ENCODE measurements at regions of chr7 and their contacts with region 1.

Region 1: GRCh38 chr7:26200444-26201246 is at the start of gene HNRNPA2B1:
- DNase-seq: peak; percentile 97
- ATAC-seq: peak; percentile 81
- H3K4me3 ChIP-seq: peak within 1 kb of the TSS; percentile 81
- H3K27ac ChIP-seq: peak within 1 kb of the TSS; percentile 100
- H3K4me1 ChIP-seq: 0 out of 2 replicates have a peak, but pooled peaks cover 2% of the 10 kb centered on the region
- H3K27me3 ChIP-seq: no peaks in the 10 kb centered on the region
- CTCF ChIP-seq: no peak
- POLR2A ChIP-seq: peak; percentile 100
- RAD21 ChIP-seq: no peak
- total RNA-seq, gene HNRNPA2B1: 49.3 and 118 TPM in 2 replicates

Region 2: GRCh38 chr7:25851332-25852210 is 349.1 kb before region 1 on chr7:
- CTCF ChIA-PET with region 1: no interaction called
- POLR2A ChIA-PET with region 1: no interaction called
- dilution Hi-C with region 1: no loop called
- in situ Hi-C with region 1: loop called (anchors 10 kb)
- intact Hi-C with region 1: loop called (anchors 10 kb)
- DNase-seq: peak; percentile 76
- ATAC-seq: peak; percentile 46
- H3K4me3 ChIP-seq: no peak overlapping the region
- H3K27ac ChIP-seq: peak overlapping the region; percentile 14; the same call in 1 of the 2 replicates
- H3K4me1 ChIP-seq: peaks cover 20% of the 10 kb centered on the region; the same call in 1 of the 2 replicates
- H3K27me3 ChIP-seq: peaks cover 3% of the 10 kb centered on the region; the same call in 1 of the 2 replicates
- CTCF ChIP-seq: peak; percentile 83
- POLR2A ChIP-seq: no peak
- RAD21 ChIP-seq: peak; percentile 88

Region 3: GRCh38 chr7:26156454-26157365 is 43.9 kb before region 1 on chr7:
- CTCF ChIA-PET with region 1: interaction called, 3 read pairs
- POLR2A ChIA-PET with region 1: no interaction called
- dilution Hi-C with region 1: no loop called
- in situ Hi-C with region 1: no loop called
- intact Hi-C with region 1: loop called (anchors 1 kb)
- DNase-seq: peak; percentile 97
- ATAC-seq: peak; percentile 74
- H3K4me3 ChIP-seq: peak overlapping the region; percentile 20
- H3K27ac ChIP-seq: peak overlapping the region; percentile 89
- H3K4me1 ChIP-seq: peaks cover 32% of the 10 kb centered on the region
- H3K27me3 ChIP-seq: no peaks in the 10 kb centered on the region
- CTCF ChIP-seq: no peak
- POLR2A ChIP-seq: no peak
- RAD21 ChIP-seq: no peak

Region 4: GRCh38 chr7:26534649-26535482 is 334.2 kb after region 1 on chr7:
- CTCF ChIA-PET with region 1: no interaction called
- POLR2A ChIA-PET with region 1: no interaction called
- dilution Hi-C with region 1: no loop called
- in situ Hi-C with region 1: no loop called
- intact Hi-C with region 1: no loop called
- DNase-seq: no peak
- ATAC-seq: no peak
- H3K4me3 ChIP-seq: no peak overlapping the region
- H3K27ac ChIP-seq: no peak overlapping the region
- H3K4me1 ChIP-seq: no peaks in the 10 kb centered on the region
- H3K27me3 ChIP-seq: peaks cover 5% of the 10 kb centered on the region
- CTCF ChIP-seq: no peak
- POLR2A ChIP-seq: no peak
- RAD21 ChIP-seq: no peak

Region 5: DNA sequence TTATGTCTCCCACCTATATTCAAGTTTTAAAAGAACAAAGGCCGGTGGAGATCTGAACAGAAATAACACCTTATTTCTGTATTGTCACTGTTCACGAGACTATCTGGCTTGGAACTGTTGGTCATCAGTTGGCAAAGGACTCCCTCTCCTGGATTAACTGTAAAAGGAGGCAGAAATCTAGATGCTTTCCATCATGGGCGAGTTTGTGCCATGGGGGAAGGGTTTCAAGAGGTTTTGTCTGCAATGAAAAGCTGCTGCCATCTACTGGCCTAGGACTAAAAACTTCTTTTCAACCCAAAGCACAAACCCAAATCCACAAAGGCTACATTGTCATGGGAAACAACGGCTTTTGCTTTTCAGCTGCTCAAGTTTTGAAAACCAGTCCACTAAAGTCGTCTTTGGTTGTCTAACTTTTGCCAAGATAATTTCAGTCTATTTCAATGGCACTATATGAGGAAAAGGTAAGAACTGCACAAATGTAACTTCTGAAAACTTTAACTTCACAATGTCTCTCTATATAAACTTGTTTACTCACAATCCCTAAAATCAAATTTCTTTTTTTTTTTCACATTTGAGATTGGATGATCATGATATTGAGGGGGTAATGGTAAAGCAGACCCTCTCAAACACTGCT is 467.0 kb after region 1 on chr7:
- CTCF ChIA-PET with region 1: no interaction called
- POLR2A ChIA-PET with region 1: no interaction called
- dilution Hi-C with region 1: no loop called
- in situ Hi-C with region 1: loop called (anchors 25 kb)
- intact Hi-C with region 1: loop called (anchors 2 kb)
- DNase-seq: peak; percentile 90
- ATAC-seq: peak; percentile 96
- H3K4me3 ChIP-seq: no peak overlapping the region
- H3K27ac ChIP-seq: no peak overlapping the region
- H3K4me1 ChIP-seq: no peaks in the 10 kb centered on the region
- H3K27me3 ChIP-seq: no peaks in the 10 kb centered on the region
- CTCF ChIP-seq: peak; percentile 95
- POLR2A ChIP-seq: no peak
- RAD21 ChIP-seq: peak; percentile 80

Region 6: DNA sequence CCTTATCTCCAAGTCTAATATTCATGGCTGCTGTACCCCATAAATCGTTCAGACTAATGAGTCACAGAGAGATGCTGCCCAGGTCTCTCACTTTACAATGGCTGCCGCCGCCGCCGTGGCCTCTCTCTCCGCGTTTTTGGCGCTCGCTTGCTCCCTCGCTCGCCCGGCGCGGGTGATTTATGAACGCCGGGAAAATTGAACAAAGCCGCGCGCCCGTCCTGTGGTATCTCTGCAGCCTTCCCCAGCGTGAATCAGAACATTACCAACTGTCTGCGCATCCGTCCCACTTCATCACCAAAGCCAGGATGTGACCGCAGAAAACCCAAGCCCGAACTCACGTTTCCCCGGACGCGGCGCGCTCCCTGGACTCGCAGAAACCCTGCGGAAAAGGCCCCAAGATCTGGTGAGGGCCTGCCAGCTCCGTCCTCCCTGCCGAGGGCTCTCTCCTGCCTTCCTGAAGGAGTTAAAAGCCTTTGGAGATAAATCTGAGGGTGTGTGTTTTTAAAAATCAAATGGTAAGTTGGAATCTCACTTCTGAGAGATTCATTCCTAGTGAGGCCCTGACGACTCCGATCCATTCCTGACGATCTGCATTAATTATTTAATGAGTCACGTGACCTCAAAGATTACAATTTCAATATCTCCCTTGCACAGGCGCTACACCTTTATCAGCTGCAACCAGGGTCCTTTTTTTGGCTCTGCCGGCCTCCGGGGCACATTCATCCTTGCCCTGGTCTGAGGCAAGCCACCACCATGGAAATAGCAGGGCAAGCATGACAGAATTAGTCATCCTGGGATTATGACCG is 923.7 kb after region 1 on chr7:
- CTCF ChIA-PET with region 1: no interaction called
- POLR2A ChIA-PET with region 1: no interaction called
- dilution Hi-C with region 1: no loop called
- in situ Hi-C with region 1: no loop called
- intact Hi-C with region 1: loop called (anchors 5 kb)
- DNase-seq: peak; percentile 97
- ATAC-seq: peak; percentile 36
- H3K4me3 ChIP-seq: peak overlapping the region; percentile 48
- H3K27ac ChIP-seq: peak overlapping the region; percentile 99
- H3K4me1 ChIP-seq: peaks cover 35% of the 10 kb centered on the region
- H3K27me3 ChIP-seq: no peaks in the 10 kb centered on the region
- CTCF ChIP-seq: no peak
- POLR2A ChIP-seq: no peak
- RAD21 ChIP-seq: no peak; the same call in 1 of the 2 replicates

Region 7: DNA sequence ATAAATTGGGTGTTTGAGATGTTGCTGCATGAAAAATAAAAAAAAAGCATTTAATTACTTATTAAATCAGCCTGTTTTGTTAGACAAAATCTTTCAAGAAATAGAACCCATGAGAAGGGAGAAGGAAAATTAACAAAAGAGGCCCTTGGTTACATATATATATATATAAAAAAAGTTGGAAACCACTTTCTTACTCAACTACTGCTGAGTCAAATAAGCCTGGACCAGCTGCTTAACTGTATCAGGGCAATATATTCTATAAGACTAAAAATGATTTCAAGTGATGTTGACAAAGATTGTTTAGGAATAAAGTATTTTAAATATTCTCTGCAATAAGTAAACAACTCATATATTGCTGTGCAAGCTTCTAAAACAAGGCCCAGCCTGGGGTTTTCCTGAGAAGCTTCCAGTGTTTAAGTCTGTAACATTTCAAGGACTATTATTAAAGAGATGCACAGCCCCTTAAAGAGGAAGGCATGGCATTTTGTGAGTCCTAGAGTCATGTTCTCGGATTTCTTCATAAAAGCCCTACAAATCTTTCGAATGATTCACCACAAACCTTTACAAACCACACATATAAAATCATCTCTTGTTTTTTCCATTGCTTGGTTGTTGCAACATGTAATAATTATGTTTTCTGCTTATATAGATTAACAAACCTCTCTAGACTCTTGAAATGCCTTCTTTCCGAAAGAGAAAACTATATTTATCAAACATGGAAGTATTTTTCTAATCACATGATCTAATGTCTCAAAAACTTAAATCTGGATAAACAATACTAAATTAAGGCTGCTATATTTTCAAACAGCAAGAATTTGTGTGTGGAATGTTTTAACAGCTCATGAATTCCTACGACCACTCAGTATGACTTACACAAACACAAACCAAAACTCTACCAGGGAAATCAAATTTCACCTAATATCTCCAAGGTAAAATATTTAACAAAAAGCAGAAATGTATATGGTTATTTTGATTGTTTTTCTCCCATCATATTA is 1965.6 kb after region 1 on chr7:
- CTCF ChIA-PET with region 1: no interaction called
- POLR2A ChIA-PET with region 1: no interaction called
- dilution Hi-C with region 1: no loop called
- in situ Hi-C with region 1: no loop called
- intact Hi-C with region 1: loop called (anchors 5 kb)
- DNase-seq: peak; percentile 92
- ATAC-seq: peak; percentile 74
- H3K4me3 ChIP-seq: no peak overlapping the region
- H3K27ac ChIP-seq: peak overlapping the region; percentile 88
- H3K4me1 ChIP-seq: peaks cover 31% of the 10 kb centered on the region
- H3K27me3 ChIP-seq: no peaks in the 10 kb centered on the region
- CTCF ChIP-seq: no peak
- POLR2A ChIP-seq: no peak
- RAD21 ChIP-seq: no peak